ENCODE measurements at regions of chr2 and their contacts with region 1.

Region 1: DNA sequence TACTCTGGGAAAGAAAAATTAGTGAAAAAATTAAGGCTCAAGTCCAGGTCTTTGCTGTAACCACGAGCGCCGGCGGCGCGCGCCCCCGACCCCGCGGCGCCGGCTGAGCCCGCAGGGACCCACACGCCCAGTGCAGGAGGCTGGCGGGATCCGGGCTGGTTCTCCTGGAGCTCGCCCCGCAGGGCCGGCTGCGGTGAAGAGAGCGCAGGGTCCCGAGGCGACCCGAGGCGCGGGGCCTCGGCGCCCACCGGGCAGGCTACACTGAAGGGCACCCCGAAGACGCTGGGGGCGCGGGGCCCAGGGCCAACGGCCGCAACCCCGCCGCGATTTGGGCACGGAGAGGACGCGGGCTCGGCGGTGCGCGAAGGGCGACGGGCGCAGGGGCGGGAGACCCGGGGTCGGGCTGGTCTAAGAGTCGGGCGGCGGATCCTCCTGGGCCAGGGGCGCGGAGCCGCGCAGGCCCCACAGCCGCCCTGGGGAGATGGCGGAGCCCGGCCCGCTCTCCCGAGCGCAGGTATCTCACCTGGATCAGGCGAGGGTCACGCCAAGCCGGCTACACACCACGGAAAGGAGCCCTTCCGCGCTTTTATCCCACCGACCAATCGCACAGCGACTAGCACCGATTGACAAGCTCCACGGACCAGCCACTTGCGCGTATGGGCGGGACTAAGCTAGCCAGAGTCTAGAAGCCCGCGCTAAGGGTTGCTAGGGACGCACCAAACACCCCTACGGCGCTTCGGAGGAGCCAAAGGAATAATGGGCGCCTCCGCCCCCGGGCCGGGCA is at the start of gene PASK:
- DNase-seq: peak; percentile 98
- total RNA-seq, gene PASK: 2.3 to 4.4 TPM

Region 2: DNA sequence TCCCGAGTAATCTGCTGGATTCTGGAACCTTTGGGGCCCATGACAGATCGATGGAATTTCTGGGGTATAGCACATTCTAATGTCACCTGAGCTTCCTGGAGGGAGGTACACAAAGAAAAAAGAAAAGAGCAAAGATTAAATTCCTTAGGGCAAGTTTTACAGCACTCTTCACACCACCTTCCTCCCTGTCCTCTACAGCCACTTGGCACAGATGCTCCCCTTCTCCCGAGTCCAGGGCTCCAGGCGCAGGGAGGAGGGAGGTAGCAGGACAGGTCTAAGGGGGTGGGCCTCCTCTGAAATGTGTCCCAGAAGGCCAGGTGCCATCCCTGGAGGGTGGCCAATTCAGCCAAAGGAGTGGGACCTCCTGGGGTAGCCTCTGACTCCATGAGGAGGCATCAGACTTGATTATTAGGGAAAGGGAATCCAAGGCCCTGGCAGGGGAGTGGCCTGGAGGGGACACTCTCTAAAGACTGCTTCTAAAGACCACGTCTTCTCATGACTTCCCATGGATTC is 89.7 kb after region 1 on chr2:
- intact Hi-C with region 1: loop called in 1 of 2 experiments (anchors 1 kb)
- DNase-seq: no peak

Measured in posterior vena cava (tissue), 2 donors.